Activated naive CD4-positive, alpha-beta T cell treated with anti-CD3 and anti-CD28 coated beads for 36 hours (primary cell): ENCODE measurements at regions of chr5 and their contacts with region 1.

Region 1: GRCh38 chr5:171336521-171337209 is 27.6 kb downstream of the TLX3 start:
- DNase-seq: peak; percentile 49
- H3K4me3 Mint-ChIP-seq: peak overlapping the region; percentile 62
- H3K27ac Mint-ChIP-seq: no peak overlapping the region
- H3K4me1 Mint-ChIP-seq: peaks cover 5% of the 10 kb centered on the region
- H3K27me3 Mint-ChIP-seq: peaks cover 32% of the 10 kb centered on the region

Region 2: DNA sequence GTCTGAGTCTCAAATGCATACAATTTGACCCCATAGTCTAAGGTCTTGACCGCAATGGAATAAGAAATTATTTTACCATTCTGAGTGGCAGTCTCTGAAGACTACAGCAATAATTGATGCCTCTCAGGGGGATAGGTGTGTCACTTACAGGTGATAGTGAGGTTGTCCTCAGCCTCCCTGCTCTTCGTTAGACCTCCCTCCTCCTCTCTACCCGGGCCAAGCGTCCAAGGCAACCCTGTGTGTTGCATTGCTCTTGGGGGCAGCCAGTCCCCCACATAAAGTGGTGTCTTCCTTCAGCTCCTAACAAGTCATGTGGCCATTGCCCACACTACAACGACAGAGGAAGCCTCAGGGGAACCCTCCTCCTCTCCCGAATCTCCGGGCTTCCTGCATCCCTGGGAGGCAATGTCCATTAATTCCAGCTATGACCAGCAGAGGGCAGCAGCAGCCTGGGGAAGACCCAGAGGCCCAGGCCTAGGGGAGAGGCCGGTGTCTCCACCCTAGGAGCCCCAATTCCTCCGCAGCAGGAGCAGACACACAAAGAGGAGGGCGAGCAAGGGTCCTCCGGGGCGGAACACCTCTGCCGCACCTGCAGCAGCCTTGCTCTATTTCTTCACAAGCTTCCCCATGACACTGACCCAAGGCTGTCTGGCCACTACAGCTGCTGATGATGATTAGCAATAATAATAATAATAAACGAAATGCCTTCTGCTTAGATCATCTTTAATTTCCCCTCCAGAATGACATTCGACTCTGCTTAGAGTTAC is 698.0 kb before region 1 on chr5:
- CTCF ChIA-PET with region 1: interaction called, 3 read pairs
- intact Hi-C with region 1: loop called (anchors 2 kb)
- DNase-seq: peak; percentile 83
- H3K4me3 Mint-ChIP-seq: no peak overlapping the region
- H3K27ac Mint-ChIP-seq: no peak overlapping the region
- H3K4me1 Mint-ChIP-seq: peaks cover 9% of the 10 kb centered on the region
- H3K27me3 Mint-ChIP-seq: peaks cover 3% of the 10 kb centered on the region

Region 3: GRCh38 chr5:171207256-171207847 is 129.3 kb before region 1 on chr5:
- CTCF ChIA-PET with region 1: interaction called, 20 read pairs
- intact Hi-C with region 1: loop called (anchors 1 kb)
- DNase-seq: peak; percentile 21
- H3K4me3 Mint-ChIP-seq: no peak overlapping the region
- H3K27ac Mint-ChIP-seq: no peak overlapping the region
- H3K4me1 Mint-ChIP-seq: no peaks in the 10 kb centered on the region
- H3K27me3 Mint-ChIP-seq: peaks cover 3% of the 10 kb centered on the region

Region 4: DNA sequence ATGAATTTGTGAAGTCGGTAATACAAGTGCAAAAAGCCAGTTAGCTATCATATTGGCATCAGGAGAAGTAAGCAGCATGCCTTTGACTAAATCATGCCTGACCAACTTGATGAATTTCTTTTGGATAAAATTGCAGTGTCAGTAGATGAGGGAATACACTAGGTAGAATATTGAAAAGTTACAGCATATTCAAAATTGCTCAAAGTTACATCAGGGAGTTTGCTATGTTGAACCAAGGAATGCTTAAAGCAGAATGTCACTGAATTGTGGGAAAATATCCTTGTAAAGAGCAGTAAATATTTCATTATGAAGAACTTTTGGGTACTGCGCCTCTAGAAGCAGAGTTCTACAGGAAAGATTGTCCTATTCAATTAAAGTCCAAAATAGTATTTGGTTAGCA is 114.7 kb before region 1 on chr5:
- CTCF ChIA-PET with region 1: no interaction called
- intact Hi-C with region 1: no loop called
- DNase-seq: no peak
- H3K4me3 Mint-ChIP-seq: no peak overlapping the region
- H3K27ac Mint-ChIP-seq: no peak overlapping the region
- H3K4me1 Mint-ChIP-seq: no peaks in the 10 kb centered on the region
- H3K27me3 Mint-ChIP-seq: peaks cover 8% of the 10 kb centered on the region

Region 5: GRCh38 chr5:171272996-171273970 is 63.4 kb before region 1 on chr5:
- CTCF ChIA-PET with region 1: interaction called, 9 read pairs
- intact Hi-C with region 1: loop called (anchors 1 kb)
- DNase-seq: peak; percentile 35
- H3K4me3 Mint-ChIP-seq: no peak overlapping the region
- H3K27ac Mint-ChIP-seq: no peak overlapping the region
- H3K4me1 Mint-ChIP-seq: no peaks in the 10 kb centered on the region
- H3K27me3 Mint-ChIP-seq: peaks cover 8% of the 10 kb centered on the region